Endothelial cell of umbilical vein (primary cell): ENCODE measurements at regions of chr1 and their contacts with region 1.

Region 1: DNA sequence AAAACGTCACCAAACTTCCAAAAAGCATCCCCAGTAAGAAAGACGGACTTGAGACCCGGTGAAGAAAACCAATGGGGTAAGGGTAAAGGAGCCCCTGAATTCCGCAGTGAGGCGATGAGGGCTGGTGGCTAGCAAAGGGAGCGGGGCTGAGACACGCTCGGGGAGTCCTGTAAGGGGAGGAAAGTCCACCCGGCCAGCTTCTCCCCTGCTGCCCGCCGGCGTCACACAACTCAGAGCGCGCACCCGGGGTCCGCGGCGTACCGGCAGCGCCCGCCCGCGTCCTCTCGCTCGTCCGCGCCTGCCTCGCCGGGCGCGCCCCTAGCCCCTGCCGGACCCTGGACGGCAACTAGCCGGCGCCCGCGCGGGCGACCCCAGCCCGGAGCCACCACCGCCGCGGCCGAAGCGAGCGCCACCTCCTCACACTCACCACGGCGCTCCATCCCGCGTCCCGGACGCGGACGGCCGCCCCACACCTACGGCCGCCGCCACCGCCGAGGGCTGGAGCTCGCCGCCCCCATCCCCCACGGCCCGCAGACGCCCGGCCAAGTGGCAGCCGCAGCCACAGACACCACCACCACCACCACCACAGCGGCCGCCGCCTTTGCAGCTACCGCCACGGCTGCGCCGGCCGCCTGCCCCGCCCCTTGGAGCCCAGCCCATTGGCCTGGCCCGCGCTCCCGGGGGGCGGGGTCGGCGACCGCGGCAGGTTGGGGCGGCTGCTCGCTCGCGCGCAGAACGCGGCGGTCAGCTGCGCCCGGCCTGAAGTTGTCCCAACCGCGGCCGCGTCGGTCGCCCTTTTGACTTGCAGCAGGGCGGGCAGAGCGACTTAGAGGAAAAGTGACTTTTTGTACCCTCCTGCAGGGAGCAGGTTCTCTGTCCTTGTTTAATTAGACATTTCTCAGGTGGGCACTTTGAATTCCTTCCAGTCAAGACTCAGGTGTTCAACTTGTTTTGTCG is 10.0 kb upstream of the ARHGAP29 start:
- DNase-seq: peak; percentile 80
- H3K4me3 ChIP-seq: peak overlapping the region; percentile 58 to 98 (median 75)
- H3K27ac ChIP-seq: peak overlapping the region; percentile 90
- H3K4me1 ChIP-seq: peaks cover 23% of the 10 kb centered on the region
- H3K27me3 ChIP-seq: no peaks in the 10 kb centered on the region
- CTCF ChIP-seq: no peak
- POLR2A ChIP-seq: peak; percentile 95

Region 2: GRCh38 chr1:94258873-94259331 is 11.5 kb after region 1 on chr1:
- CTCF ChIA-PET with region 1: interaction called, 12 read pairs
- POLR2A ChIA-PET with region 1: interaction called, 4 read pairs
- dilution Hi-C with region 1: no loop called
- intact Hi-C with region 1: no loop called
- DNase-seq: peak; percentile 85
- H3K4me3 ChIP-seq: no peak overlapping the region
- H3K27ac ChIP-seq: peak overlapping the region; percentile 4
- H3K4me1 ChIP-seq: peaks cover 48% of the 10 kb centered on the region
- H3K27me3 ChIP-seq: no peaks in the 10 kb centered on the region
- CTCF ChIP-seq: no peak
- POLR2A ChIP-seq: no peak

Region 3: DNA sequence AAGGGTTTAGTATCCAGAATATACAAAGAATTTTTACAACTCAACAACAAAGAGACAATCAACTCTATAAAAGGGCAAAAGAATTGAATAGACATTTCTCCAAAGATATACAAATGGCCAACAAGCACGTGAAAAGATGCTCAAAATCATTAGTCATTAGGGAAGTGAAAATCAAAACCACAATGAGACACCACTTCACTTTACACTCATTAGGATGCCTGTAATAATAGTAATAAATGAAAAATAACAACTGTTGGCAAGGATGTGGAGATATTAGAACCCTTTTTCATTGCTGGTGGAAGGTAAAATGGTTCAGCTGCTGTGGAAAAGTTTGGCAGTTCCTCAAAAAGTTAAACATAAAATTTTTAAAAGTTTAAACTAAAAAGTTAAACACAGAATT is 163.8 kb after region 1 on chr1:
- CTCF ChIA-PET with region 1: no interaction called
- POLR2A ChIA-PET with region 1: no interaction called
- dilution Hi-C with region 1: no loop called
- intact Hi-C with region 1: no loop called
- DNase-seq: no peak
- H3K4me3 ChIP-seq: no peak overlapping the region
- H3K27ac ChIP-seq: no peak overlapping the region
- H3K4me1 ChIP-seq: peaks cover 5% of the 10 kb centered on the region
- H3K27me3 ChIP-seq: peaks cover 4 to 14% of the 10 kb centered on the region in 2 experiments
- CTCF ChIP-seq: no peak
- POLR2A ChIP-seq: no peak